Astrocyte of the cerebellum (primary cell): ENCODE measurements at regions of chr12 and their contacts with region 1.

Region 1: GRCh38 chr12:64147011-64147631 is 75.0 kb downstream of the KICS2 start:
- DNase-seq: no peak
- H3K4me3 ChIP-seq: no peak overlapping the region
- CTCF ChIP-seq: no peak

Region 2: DNA sequence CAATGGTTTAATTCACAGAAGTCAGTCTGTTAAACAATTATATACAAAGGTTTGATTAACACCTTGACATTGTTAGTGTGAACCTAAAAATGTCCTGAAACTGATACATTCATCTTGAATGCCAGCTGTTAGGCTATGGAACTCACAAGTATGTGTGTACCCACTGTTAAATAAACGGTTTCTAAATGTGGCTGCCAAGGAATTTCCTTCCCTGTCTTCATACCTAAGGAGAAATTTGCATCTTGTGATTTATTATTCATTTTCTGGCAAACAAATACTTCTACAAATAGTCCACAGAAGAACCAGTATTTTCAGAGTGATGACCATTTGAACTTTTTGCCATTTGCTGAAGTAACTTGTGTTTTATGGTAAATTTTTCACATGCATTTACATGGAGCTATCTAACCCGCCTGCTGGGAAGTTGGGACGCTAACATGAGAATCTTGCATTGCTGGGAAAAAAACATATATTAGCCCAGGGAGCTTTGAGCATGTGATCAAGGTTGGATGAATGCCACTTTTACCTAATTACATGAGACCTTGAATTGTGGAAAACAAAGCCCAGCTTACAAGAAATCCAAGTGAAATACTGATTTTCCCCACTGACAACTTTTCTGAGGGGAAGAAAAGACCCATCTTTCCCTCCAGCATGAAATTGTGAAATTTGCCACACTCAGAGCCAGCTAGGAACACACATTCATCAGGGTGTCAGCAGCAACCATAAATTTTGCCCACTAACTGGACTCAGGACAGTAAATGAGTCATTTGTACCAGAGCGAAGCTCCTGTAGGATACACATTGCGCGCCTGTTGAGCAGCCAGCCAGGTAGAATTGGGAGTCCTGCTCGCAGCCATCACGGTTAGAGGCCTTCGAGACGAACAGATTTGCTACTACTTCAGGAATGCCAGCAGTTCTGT is 43.0 kb before region 1 on chr12:
- in situ Hi-C with region 1: no loop called
- DNase-seq: no peak
- H3K4me3 ChIP-seq: no peak overlapping the region
- CTCF ChIP-seq: no peak

Region 3: GRCh38 chr12:64240781-64241180 is 93.7 kb after region 1 on chr12:
- in situ Hi-C with region 1: loop called (anchors 5 kb)
- DNase-seq: no peak
- H3K4me3 ChIP-seq: no peak overlapping the region
- CTCF ChIP-seq: no peak